Esophagus muscularis mucosa (tissue), 4 donors: ENCODE measurements at regions of chr9 and their contacts with region 1.

Region 1: GRCh38 chr9:12329623-12329985 is 363.6 kb upstream of the TYRP1 start:
- DNase-seq: no peak
- H3K4me3 ChIP-seq: no peak overlapping the region
- H3K27ac ChIP-seq: no peak overlapping the region
- H3K4me1 ChIP-seq: peaks cover 0 to 4% (median 2%) of the 10 kb centered on the region in 4 donors
- H3K27me3 ChIP-seq: no peaks in the 10 kb centered on the region
- CTCF ChIP-seq: no peak
- EP300 ChIP-seq: no peak
- POLR2A ChIP-seq: no peak

Region 2: GRCh38 chr9:10366171-10366779 is 1963.3 kb before region 1 on chr9:
- intact Hi-C with region 1: loop called (anchors 10 kb)
- DNase-seq: no peak
- H3K4me3 ChIP-seq: no peak overlapping the region
- H3K27ac ChIP-seq: no peak overlapping the region
- H3K4me1 ChIP-seq: no peaks in the 10 kb centered on the region
- H3K27me3 ChIP-seq: no peaks in the 10 kb centered on the region
- CTCF ChIP-seq: peak; percentile 34 to 63 (median 51)
- EP300 ChIP-seq: no peak
- POLR2A ChIP-seq: no peak